Cardiac septum (tissue), 1 donor: ENCODE measurements at regions of chr7 and their contacts with region 1.

Region 1: GRCh38 chr7:136884492-136884891 is 16.0 kb downstream of the CHRM2 start:
- DNase-seq: no peak

Region 2: DNA sequence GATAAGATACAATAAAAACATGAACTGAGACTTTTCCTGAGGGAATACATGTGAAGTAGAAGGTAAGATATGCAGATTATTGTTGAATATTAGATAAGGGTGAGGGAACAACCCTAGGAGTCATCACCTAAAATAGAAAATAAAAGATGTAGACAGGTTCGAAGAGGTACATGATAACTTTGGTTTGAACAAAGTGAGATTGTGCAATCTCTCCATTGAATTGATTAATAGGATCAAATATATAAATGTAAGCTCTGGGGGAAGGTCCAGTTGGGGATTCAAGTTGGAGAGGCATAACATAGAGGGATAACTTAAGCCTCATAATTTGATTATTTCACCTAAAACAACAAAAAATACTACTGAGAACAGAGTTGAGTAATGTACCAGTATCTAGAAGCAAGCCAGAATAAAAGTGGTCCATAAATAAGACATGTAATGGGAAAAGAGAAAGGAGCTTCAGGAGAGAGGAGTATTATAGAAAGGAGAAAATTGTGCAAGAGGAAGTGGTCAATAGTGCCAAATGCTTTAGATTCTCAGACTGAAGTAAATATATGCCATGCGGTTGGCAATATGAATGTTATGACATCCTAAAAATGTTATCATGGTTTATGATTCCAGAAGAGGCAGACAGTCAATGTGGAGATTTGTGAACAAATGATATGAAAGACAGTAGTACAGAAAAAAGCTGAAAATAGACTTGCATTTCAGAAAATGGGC is 298.4 kb before region 1 on chr7:
- intact Hi-C with region 1: no loop called
- DNase-seq: no peak

Region 3: GRCh38 chr7:136941816-136942215 is 57.3 kb after region 1 on chr7:
- intact Hi-C with region 1: loop called (anchors 2 kb)
- DNase-seq: no peak